Motor neuron (in vitro differentiated cells): ENCODE measurements at regions of chr16 and their contacts with region 1.

Region 1: GRCh38 chr16:75464130-75464918 is at the start of gene TMEM170A:
- ATAC-seq: peak; percentile 91 to 97 (median 95)
- H3K4me3 ChIP-seq: peak within 1 kb of the TSS; percentile 56 to 92 (median 79)
- H3K27ac ChIP-seq: peak within 1 kb of the TSS; percentile 80 to 89
- H3K4me1 ChIP-seq: peaks cover 7 to 13% of the 10 kb centered on the region in 2 donors
- total RNA-seq, gene TMEM170A: 7.9 to 24.2 (median 17.1) TPM

Region 2: GRCh38 chr16:75622761-75623605 is 158.7 kb after region 1 on chr16 and contains the start of gene ADAT1:
- in situ Hi-C with region 1: loop called in 1 of 9 experiments (anchors 25 kb)
- ATAC-seq: peak; percentile 87 to 98 (median 96)
- H3K4me3 ChIP-seq: peak within 1 kb of the TSS; percentile 48 to 80 (median 68)
- H3K27ac ChIP-seq: peak within 1 kb of the TSS; percentile 78
- H3K4me1 ChIP-seq: peaks cover 14 to 17% of the 10 kb centered on the region in 2 donors
- total RNA-seq, gene ADAT1: 34.0 to 67.2 (median 48.7) TPM

Region 3: DNA sequence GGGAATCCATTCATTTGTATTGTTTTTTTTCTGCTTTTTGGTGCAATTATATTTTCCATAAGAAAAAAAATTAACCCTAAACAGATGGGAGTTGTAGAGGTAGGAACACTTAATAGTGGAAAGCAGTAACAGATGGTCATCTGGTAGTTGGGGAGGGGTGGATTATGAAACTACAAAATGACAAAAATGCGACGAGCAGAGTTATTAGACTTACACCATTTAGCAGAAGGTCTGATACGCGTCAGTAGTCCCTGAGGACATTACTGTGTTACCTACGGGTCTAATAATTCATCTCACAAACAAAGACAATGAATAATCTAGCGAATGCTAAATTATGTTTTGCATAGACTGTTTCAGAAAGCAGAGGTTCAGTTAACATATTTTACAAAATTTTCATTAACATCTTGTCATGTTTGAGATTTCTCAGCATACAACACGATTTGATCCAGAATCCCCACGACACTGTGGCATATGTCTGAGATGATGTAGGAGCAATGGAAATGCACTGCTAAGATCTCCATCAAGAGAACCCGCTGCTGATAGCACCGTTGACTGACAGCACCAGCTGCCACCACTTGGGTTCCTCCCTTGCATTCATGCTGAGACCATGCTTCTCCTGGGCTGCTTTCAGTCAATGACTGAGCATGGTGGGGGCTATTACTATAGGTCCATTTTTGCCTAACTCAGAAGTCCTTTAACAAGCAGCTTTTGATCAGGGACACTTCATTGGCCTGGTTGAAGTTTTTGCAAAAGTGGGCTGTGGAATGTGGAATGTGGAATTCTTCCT is 444.2 kb after region 1 on chr16:
- in situ Hi-C with region 1: no loop called
- ATAC-seq: peak in 6 of 8 experiments; percentile 14 to 64 (median 34)
- H3K4me3 ChIP-seq: no peak overlapping the region
- H3K27ac ChIP-seq: no peak overlapping the region
- H3K4me1 ChIP-seq: peaks cover 3 to 6% of the 10 kb centered on the region in 2 donors